Heart left ventricle (tissue), 16 donors: ENCODE measurements at regions of chr16 and their contacts with region 1.

Region 1: GRCh38 chr16:7967996-7968509 is 622.3 kb downstream of the TMEM114 start:
- DNase-seq: no peak
- ATAC-seq: no peak
- H3K4me3 ChIP-seq: no peak overlapping the region
- H3K27ac ChIP-seq: no peak overlapping the region
- H3K4me1 ChIP-seq: no peaks in the 10 kb centered on the region
- H3K27me3 ChIP-seq: no peaks in the 10 kb centered on the region
- CTCF ChIP-seq: no peak
- POLR2A ChIP-seq: no peak

Region 2: DNA sequence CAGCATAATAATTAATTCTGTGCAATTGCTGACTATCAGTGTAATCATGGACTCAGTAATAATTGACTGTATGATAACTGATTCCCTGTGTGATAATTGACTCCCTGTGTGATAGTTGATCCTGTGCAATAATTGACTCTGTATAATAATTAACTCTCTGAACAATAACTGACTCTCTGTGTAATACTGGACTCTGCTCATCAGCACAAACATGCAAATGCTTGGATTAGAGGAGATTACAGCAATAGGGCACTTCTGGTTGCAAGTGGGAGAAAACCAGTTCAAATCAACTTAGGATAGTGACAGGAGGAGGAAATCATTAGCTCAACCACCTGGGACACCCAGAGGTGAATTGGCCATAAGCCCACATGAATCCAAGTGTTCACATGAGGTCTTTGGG is 53.3 kb before region 1 on chr16:
- intact Hi-C with region 1: loop called in 1 of 10 experiments (anchors 10 kb)
- DNase-seq: no peak
- ATAC-seq: no peak
- H3K4me3 ChIP-seq: no peak overlapping the region
- H3K27ac ChIP-seq: no peak overlapping the region
- H3K4me1 ChIP-seq: no peaks in the 10 kb centered on the region
- H3K27me3 ChIP-seq: no peaks in the 10 kb centered on the region
- CTCF ChIP-seq: no peak
- POLR2A ChIP-seq: no peak